Activated B cell treated with CpG ODN at 0.5 μM for 24 hours (primary cell): ENCODE measurements at regions of chr3 and their contacts with region 1.

Region 1: GRCh38 chr3:9731206-9732079 is at the start of gene BRPF1:
- DNase-seq: peak; percentile 91
- ATAC-seq: peak; percentile 95
- H3K4me3 Mint-ChIP-seq: peak within 1 kb of the TSS; percentile 95
- H3K27ac Mint-ChIP-seq: peak within 1 kb of the TSS; percentile 99
- H3K4me1 Mint-ChIP-seq: peaks cover 48% of the 10 kb centered on the region
- H3K27me3 Mint-ChIP-seq: no peaks in the 10 kb centered on the region
- CTCF ChIP-seq: no peak
- total RNA-seq, gene BRPF1: 33.5 and 35.2 TPM in 2 replicates

Region 2: DNA sequence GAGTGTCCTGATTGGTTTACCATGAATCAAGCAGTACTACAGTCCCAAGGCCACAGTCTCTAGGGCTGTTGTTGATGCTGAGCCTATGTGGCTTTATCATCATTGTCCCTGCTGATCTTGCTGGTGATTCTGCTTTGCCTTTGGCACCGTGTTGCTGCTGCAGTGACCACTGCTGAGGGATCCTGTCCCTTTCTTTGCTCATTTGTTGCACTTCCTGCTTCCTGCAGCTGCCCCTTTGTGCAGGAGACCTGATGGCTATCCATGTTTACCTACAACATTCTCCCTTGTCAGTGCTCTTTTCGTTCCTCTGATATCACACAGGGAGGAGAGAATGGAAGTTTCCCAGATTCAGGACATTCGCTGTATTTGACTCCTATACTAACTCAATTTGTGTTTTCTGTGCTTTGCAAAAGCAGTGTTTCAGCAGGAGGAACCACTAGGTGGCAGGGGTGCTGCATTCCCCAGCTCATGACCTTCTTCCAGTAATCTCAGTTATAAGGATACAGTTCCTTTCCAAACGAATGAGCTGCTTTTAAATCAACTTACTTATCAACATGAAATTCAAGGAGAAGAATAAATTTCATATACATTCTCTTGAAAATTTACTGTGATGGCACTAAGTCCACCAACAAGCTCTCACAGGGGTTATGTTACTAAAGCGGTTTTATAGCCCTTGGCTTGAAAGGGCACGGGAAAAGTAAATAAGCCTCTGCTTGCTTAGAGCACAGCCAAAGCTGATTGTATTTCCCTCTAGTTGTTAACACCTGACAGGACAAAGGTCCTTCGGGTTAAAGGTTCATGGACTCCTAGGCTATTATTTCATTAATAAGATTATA is 378.3 kb before region 1 on chr3:
- CTCF ChIA-PET with region 1: interaction called, 13 read pairs
- POLR2A ChIA-PET with region 1: no interaction called
- intact Hi-C with region 1: loop called (anchors 1 kb)
- DNase-seq: peak; percentile 19
- ATAC-seq: peak; percentile 53
- H3K4me3 Mint-ChIP-seq: no peak overlapping the region
- H3K27ac Mint-ChIP-seq: no peak overlapping the region
- H3K4me1 Mint-ChIP-seq: peaks cover 28% of the 10 kb centered on the region
- H3K27me3 Mint-ChIP-seq: no peaks in the 10 kb centered on the region
- CTCF ChIP-seq: peak; percentile 47

Region 3: GRCh38 chr3:9404680-9405079 is 326.8 kb before region 1 on chr3:
- CTCF ChIA-PET with region 1: no interaction called
- POLR2A ChIA-PET with region 1: no interaction called
- intact Hi-C with region 1: no loop called
- DNase-seq: no peak
- ATAC-seq: no peak
- H3K4me3 Mint-ChIP-seq: no peak overlapping the region
- H3K27ac Mint-ChIP-seq: no peak overlapping the region
- H3K4me1 Mint-ChIP-seq: peaks cover 86% of the 10 kb centered on the region
- H3K27me3 Mint-ChIP-seq: no peaks in the 10 kb centered on the region
- CTCF ChIP-seq: no peak

Region 4: GRCh38 chr3:9503283-9503682 is 228.2 kb before region 1 on chr3:
- CTCF ChIA-PET with region 1: interaction called, 21 read pairs
- POLR2A ChIA-PET with region 1: no interaction called
- intact Hi-C with region 1: loop called (anchors 1 kb)
- DNase-seq: peak; percentile 63
- ATAC-seq: peak; percentile 83
- H3K4me3 Mint-ChIP-seq: no peak overlapping the region
- H3K27ac Mint-ChIP-seq: no peak overlapping the region
- H3K4me1 Mint-ChIP-seq: peaks cover 26% of the 10 kb centered on the region
- H3K27me3 Mint-ChIP-seq: peaks cover 35% of the 10 kb centered on the region
- CTCF ChIP-seq: peak; percentile 50

Region 5: GRCh38 chr3:9749645-9750555 is 18.5 kb after region 1 on chr3 and contains the start of gene OGG1:
- CTCF ChIA-PET with region 1: interaction called, 3 read pairs
- POLR2A ChIA-PET with region 1: interaction called, 55 read pairs
- intact Hi-C with region 1: loop called (anchors 1 kb)
- DNase-seq: peak; percentile 89
- ATAC-seq: peak; percentile 90
- H3K4me3 Mint-ChIP-seq: peak within 1 kb of the TSS; percentile 94
- H3K27ac Mint-ChIP-seq: peak within 1 kb of the TSS; percentile 95
- H3K4me1 Mint-ChIP-seq: peaks cover 48% of the 10 kb centered on the region
- H3K27me3 Mint-ChIP-seq: no peaks in the 10 kb centered on the region
- CTCF ChIP-seq: no peak
- total RNA-seq, gene OGG1: 43.5 and 60.7 TPM in 2 replicates

Region 6: GRCh38 chr3:9843715-9844438 is 112.4 kb after region 1 on chr3 and contains the start of gene RPUSD3:
- CTCF ChIA-PET with region 1: no interaction called
- POLR2A ChIA-PET with region 1: interaction called, 3 read pairs
- intact Hi-C with region 1: loop called (anchors 1 kb)
- DNase-seq: peak; percentile 95
- ATAC-seq: peak; percentile 100
- H3K4me3 Mint-ChIP-seq: peak within 1 kb of the TSS; percentile 98
- H3K27ac Mint-ChIP-seq: peak within 1 kb of the TSS; percentile 86
- H3K4me1 Mint-ChIP-seq: peaks cover 20% of the 10 kb centered on the region
- H3K27me3 Mint-ChIP-seq: no peaks in the 10 kb centered on the region
- CTCF ChIP-seq: no peak
- total RNA-seq, gene RPUSD3: 49.5 and 55.7 TPM in 2 replicates

Region 7: DNA sequence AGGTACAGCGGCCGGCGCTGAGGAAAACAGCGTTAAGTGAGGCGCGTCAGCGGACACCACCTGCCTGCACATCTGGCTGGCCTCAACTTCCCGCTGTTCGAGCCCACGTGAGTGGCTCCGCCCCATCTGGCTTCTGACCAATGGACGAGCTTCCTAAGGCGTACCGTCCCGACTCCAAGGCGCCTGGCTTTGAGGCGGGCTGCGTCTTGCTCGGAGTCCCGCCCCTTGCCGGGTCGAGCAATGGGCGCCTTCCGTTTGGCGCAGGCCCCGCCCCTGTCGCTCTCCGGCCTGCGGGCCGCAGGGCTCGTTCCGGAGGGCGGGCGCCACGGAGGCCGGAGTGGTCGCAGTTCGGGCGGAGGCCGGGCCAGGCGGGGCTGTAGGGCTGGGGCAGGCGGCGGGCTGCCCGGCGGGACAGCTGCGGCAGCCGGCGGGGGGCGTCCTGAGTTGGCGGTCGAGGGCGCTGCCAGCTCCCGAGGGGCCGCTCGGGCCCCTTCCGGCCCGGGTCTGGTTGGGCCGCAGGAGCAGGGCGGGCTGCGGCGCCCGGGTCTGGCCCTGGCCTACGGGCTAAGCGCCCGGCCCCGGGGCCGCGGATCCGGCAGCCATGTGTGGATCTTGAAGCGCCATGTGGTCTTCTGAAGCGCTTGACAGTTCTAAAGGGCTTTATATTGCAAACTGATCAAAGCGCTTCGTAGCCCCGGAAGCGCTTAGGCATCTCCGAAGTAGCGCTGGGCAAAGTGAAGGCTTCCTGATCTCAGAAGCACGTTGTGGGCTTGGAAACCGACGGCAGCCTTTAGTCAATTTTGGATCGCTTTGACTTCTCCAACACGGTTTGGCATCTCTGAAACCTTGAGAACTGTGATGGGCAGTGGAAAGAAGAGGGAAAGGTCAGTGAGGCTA is 517.0 kb after region 1 on chr3 and contains the start of gene TATDN2:
- CTCF ChIA-PET with region 1: no interaction called
- POLR2A ChIA-PET with region 1: interaction called, 4 read pairs
- intact Hi-C with region 1: loop called (anchors 2 kb)
- DNase-seq: peak; percentile 88
- ATAC-seq: peak; percentile 97
- H3K4me3 Mint-ChIP-seq: peak within 1 kb of the TSS; percentile 95
- H3K27ac Mint-ChIP-seq: peak within 1 kb of the TSS; percentile 91
- H3K4me1 Mint-ChIP-seq: peaks cover 39% of the 10 kb centered on the region
- H3K27me3 Mint-ChIP-seq: no peaks in the 10 kb centered on the region
- CTCF ChIP-seq: no peak
- total RNA-seq, gene TATDN2: 55.6 and 56.2 TPM in 2 replicates